Activated CD8-positive, alpha-beta T cell treated with anti-CD3 and anti-CD28 coated beads, Interleukin-2, amount 10 ng/mL, durations not matched to agents 7 days and 5 days (primary cell): ENCODE measurements at regions of chr1 and their contacts with region 1.

Region 1: GRCh38 chr1:43763497-43763973 is 56.2 kb downstream of the ST3GAL3 start:
- DNase-seq: peak; percentile 64
- ATAC-seq: peak; percentile 78
- H3K4me3 Mint-ChIP-seq: no peak overlapping the region
- H3K27ac Mint-ChIP-seq: no peak overlapping the region
- H3K4me1 Mint-ChIP-seq: no peaks in the 10 kb centered on the region
- H3K27me3 Mint-ChIP-seq: no peaks in the 10 kb centered on the region

Region 2: DNA sequence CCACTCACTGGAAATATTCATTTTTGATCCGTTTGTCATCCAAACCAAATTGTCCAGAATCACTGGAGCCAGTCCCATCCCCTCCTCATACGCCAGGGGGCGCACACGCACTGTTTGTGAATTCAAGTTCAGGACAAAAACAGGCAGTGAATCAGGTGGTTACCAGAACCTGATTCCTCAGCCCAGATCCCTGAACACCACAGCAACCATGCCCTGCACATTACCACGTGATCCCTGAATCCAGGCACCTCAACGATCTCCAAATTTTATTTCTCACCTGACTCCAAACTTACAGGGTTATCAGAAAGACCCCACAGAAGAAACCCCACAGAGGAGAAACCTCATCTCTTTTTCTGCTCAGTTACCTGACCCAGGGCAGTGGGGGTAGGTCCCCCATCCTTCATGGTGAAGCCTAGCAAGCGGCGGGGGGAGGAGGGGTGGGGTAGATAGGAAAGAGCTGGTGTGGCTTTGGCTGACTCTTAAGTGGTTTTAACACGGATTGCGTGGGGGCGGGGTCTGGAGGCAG is 234.3 kb before region 1 on chr1:
- CTCF ChIA-PET with region 1: interaction called, 14 read pairs
- POLR2A ChIA-PET with region 1: no interaction called
- DNase-seq: peak; percentile 85
- ATAC-seq: peak; percentile 73
- H3K4me3 Mint-ChIP-seq: no peak overlapping the region
- H3K27ac Mint-ChIP-seq: no peak overlapping the region
- H3K4me1 Mint-ChIP-seq: peaks cover 20% of the 10 kb centered on the region
- H3K27me3 Mint-ChIP-seq: peaks cover 48% of the 10 kb centered on the region

Region 3: GRCh38 chr1:43776043-43776761 is 12.7 kb after region 1 on chr1:
- CTCF ChIA-PET with region 1: interaction called, 21 read pairs
- POLR2A ChIA-PET with region 1: no interaction called
- DNase-seq: no peak
- ATAC-seq: no peak
- H3K4me3 Mint-ChIP-seq: no peak overlapping the region
- H3K27ac Mint-ChIP-seq: no peak overlapping the region
- H3K4me1 Mint-ChIP-seq: peaks cover 22% of the 10 kb centered on the region
- H3K27me3 Mint-ChIP-seq: no peaks in the 10 kb centered on the region

Region 4: GRCh38 chr1:43849670-43850069 is 86.1 kb after region 1 on chr1:
- CTCF ChIA-PET with region 1: interaction called, 12 read pairs
- POLR2A ChIA-PET with region 1: no interaction called
- DNase-seq: no peak
- ATAC-seq: no peak
- H3K4me3 Mint-ChIP-seq: no peak overlapping the region
- H3K27ac Mint-ChIP-seq: no peak overlapping the region
- H3K4me1 Mint-ChIP-seq: peaks cover 21% of the 10 kb centered on the region
- H3K27me3 Mint-ChIP-seq: no peaks in the 10 kb centered on the region

Region 5: DNA sequence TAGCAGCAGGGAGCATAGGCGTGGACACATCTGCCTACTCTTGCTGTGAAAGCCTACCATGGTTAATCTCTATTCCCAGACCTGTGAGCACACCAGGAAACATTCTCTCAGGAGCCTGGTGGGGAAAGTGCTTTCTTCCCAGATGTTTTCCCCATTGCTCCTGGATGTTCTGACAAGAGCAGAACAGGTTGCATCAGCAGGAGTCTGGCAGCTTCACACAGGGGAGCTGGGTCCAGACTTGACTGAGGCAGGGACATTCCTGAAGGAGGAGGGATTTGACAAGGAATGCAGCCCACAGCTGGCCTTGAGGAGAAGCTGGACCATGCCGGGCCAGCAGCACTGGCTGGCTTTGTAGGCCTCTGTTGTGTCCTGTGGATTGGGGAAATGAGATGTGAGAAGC is 149.1 kb after region 1 on chr1:
- CTCF ChIA-PET with region 1: interaction called, 19 read pairs
- POLR2A ChIA-PET with region 1: interaction called, 3 read pairs
- DNase-seq: no peak
- ATAC-seq: no peak
- H3K4me3 Mint-ChIP-seq: no peak overlapping the region
- H3K27ac Mint-ChIP-seq: no peak overlapping the region
- H3K4me1 Mint-ChIP-seq: no peaks in the 10 kb centered on the region
- H3K27me3 Mint-ChIP-seq: no peaks in the 10 kb centered on the region

Region 6: DNA sequence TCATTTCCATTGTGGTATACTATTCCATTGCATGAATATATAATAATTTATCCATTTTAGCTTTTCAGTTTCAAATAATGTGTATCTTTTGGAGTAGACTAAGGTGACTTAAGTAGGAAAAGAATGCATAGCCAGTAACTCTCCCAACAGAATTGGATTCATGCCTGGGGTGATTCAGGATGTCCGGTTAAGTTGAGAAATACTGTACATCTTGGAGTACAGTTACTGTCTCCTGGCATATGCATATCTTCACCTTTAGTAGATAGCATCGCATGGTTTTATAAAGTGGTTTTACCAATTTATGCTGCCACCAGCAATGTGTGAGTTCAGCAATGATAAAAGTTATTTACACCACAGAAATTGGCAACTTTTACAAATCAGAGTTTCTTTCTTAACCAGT is 286.3 kb after region 1 on chr1:
- CTCF ChIA-PET with region 1: interaction called, 31 read pairs
- POLR2A ChIA-PET with region 1: no interaction called
- DNase-seq: no peak
- ATAC-seq: no peak
- H3K4me3 Mint-ChIP-seq: no peak overlapping the region
- H3K27ac Mint-ChIP-seq: no peak overlapping the region
- H3K4me1 Mint-ChIP-seq: peaks cover 11% of the 10 kb centered on the region
- H3K27me3 Mint-ChIP-seq: peaks cover 16% of the 10 kb centered on the region